ENCODE measurements at regions of chr2 and their contacts with region 1.

Region 1: DNA sequence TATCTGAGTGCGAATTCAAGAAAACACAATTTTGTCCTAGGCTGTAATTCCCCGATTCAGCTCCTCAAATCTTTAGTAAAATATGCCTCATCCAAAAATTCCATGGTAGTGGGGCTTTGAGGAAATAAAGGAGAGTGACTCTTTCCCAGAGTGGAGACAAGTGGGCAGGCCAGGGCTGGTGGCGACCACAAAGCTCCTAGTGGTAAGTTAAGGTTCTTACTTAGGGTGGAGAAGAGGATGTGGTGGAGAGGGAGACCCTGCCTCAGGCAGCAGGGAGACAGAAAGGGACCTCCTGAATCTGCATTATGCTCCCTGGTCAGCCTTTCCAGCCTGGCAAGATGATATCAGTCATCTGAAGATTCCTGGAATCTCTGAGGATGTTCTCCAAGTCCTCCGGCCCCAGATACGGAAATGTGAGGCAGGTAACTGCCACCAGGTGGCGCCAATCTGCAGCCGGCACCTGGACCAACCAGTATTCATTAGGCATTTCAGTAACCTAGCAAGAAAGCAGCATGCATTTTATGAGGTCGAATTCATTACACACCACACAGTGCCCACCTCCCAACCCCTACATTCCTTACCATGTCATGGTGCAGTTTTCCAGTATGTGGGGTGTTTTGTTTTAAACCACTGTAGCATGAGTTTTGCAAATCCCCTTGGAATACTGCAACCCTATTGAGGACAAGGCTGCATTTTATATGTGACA is 106.4 kb downstream of the POLE4 start:
- DNase-seq: peak; percentile 65
- ATAC-seq: peak; percentile 62
- H3K4me3 ChIP-seq: no peak overlapping the region
- H3K4me3 Mint-ChIP-seq: no peak overlapping the region
- H3K27ac ChIP-seq: no peak overlapping the region
- H3K27ac Mint-ChIP-seq: no peak overlapping the region
- H3K4me1 ChIP-seq: no peaks in the 10 kb centered on the region
- H3K4me1 Mint-ChIP-seq: no peaks in the 10 kb centered on the region
- H3K27me3 ChIP-seq: no peaks in the 10 kb centered on the region
- H3K27me3 Mint-ChIP-seq: no peaks in the 10 kb centered on the region
- CTCF ChIP-seq: peak; percentile 95

Region 2: DNA sequence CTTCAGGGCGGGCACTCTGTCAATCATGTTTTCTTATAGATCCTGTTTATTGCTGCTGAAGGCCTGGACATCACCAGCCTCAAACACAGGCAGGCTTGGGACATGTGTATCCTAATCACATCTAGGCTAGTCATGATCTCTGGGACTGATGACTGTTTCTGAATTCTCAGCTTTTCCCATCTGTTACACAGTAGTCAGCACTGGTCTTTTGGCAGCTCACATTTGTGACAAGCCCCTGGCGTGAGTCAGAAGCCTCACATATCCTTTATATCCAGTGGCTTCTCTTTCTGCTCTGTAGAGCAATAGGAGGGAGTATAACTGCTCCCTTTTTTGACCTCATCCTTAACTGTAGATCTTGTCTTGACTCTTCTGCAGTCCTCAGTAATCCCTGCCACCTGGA is 406.3 kb before region 1 on chr2:
- CTCF ChIA-PET with region 1: no interaction called
- POLR2A ChIA-PET with region 1: no interaction called
- intact Hi-C with region 1: no loop called
- DNase-seq: no peak
- ATAC-seq: no peak
- H3K4me3 ChIP-seq: no peak overlapping the region
- H3K4me3 Mint-ChIP-seq: no peak overlapping the region
- H3K27ac ChIP-seq: no peak overlapping the region
- H3K27ac Mint-ChIP-seq: no peak overlapping the region
- H3K4me1 ChIP-seq: peaks cover 8 to 11% of the 10 kb centered on the region in 2 donors
- H3K4me1 Mint-ChIP-seq: peaks cover 14% of the 10 kb centered on the region
- H3K27me3 ChIP-seq: no peaks in the 10 kb centered on the region
- H3K27me3 Mint-ChIP-seq: no peaks in the 10 kb centered on the region
- CTCF ChIP-seq: no peak

Region 3: DNA sequence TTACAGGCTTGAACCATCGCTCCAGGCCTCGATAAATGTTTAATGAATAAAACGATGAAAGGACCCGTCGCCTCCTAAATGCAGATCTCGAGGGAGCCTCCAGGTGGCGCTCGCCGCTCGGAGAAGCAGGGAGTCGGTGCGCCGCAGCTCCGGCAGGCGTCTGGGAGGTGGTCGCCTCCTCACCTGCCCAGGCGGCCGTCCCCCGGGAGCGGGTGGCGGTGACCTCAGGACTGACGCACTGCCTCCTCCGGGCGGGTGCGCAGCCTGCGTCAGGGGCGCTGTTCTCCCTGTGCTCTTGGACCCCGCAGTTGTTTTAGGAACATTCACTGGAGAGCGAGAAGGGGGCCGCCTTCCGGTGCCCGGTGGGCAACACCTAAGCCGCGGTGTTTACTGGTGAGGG is 145.0 kb before region 1 on chr2:
- CTCF ChIA-PET with region 1: interaction called, 10 read pairs
- POLR2A ChIA-PET with region 1: no interaction called
- intact Hi-C with region 1: loop called (anchors 1 kb)
- DNase-seq: peak; percentile 79
- ATAC-seq: peak; percentile 88
- H3K4me3 ChIP-seq: peak overlapping the region in 1 of 5 experiments; percentile 21
- H3K4me3 Mint-ChIP-seq: peak overlapping the region; percentile 68
- H3K27ac ChIP-seq: no peak overlapping the region
- H3K27ac Mint-ChIP-seq: peak overlapping the region; percentile 15
- H3K4me1 ChIP-seq: peaks cover 3 to 7% of the 10 kb centered on the region in 2 donors
- H3K4me1 Mint-ChIP-seq: peaks cover 27% of the 10 kb centered on the region
- H3K27me3 ChIP-seq: peaks cover 0 to 6% (median 0%) of the 10 kb centered on the region in 4 experiments
- H3K27me3 Mint-ChIP-seq: peaks cover 18% of the 10 kb centered on the region
- CTCF ChIP-seq: peak; percentile 96

Region 4: GRCh38 chr2:75053484-75054112 is 11.2 kb before region 1 on chr2:
- CTCF ChIA-PET with region 1: interaction called, 15 read pairs
- POLR2A ChIA-PET with region 1: no interaction called
- intact Hi-C with region 1: no loop called
- DNase-seq: peak; percentile 27
- ATAC-seq: peak; percentile 45
- H3K4me3 ChIP-seq: no peak overlapping the region
- H3K4me3 Mint-ChIP-seq: no peak overlapping the region
- H3K27ac ChIP-seq: no peak overlapping the region
- H3K27ac Mint-ChIP-seq: no peak overlapping the region
- H3K4me1 ChIP-seq: no peaks in the 10 kb centered on the region
- H3K4me1 Mint-ChIP-seq: no peaks in the 10 kb centered on the region
- H3K27me3 ChIP-seq: no peaks in the 10 kb centered on the region
- H3K27me3 Mint-ChIP-seq: no peaks in the 10 kb centered on the region
- CTCF ChIP-seq: peak; percentile 65

Region 5: GRCh38 chr2:75076088-75076487 is 11.2 kb after region 1 on chr2:
- CTCF ChIA-PET with region 1: interaction called, 39 read pairs
- POLR2A ChIA-PET with region 1: no interaction called
- intact Hi-C with region 1: no loop called
- DNase-seq: no peak
- ATAC-seq: no peak
- H3K4me3 ChIP-seq: no peak overlapping the region
- H3K4me3 Mint-ChIP-seq: no peak overlapping the region
- H3K27ac ChIP-seq: no peak overlapping the region
- H3K27ac Mint-ChIP-seq: no peak overlapping the region
- H3K4me1 ChIP-seq: no peaks in the 10 kb centered on the region
- H3K4me1 Mint-ChIP-seq: no peaks in the 10 kb centered on the region
- H3K27me3 ChIP-seq: no peaks in the 10 kb centered on the region
- H3K27me3 Mint-ChIP-seq: no peaks in the 10 kb centered on the region
- CTCF ChIP-seq: no peak

Region 6: DNA sequence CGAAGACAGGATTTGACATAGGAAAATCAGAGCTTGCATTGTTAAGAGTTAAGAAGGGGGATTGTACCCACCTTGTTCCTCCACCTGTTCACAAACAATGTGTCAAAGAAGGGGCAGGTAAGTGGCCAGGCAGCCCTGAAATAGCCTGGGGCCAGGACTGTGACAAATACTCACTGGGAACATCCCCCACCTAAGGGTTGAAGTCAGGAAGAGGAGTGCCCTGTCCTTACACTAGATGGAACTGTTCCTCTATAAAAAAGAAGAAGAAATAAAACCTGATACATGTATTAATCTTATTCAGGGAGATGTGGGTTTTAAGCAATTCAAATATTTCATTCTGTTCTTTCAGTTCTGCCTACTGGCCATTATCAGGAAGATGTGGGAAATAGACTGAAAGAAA is 92.6 kb after region 1 on chr2:
- CTCF ChIA-PET with region 1: no interaction called
- POLR2A ChIA-PET with region 1: no interaction called
- intact Hi-C with region 1: no loop called
- DNase-seq: no peak
- ATAC-seq: no peak
- H3K4me3 ChIP-seq: no peak overlapping the region
- H3K4me3 Mint-ChIP-seq: no peak overlapping the region
- H3K27ac ChIP-seq: no peak overlapping the region
- H3K27ac Mint-ChIP-seq: no peak overlapping the region
- H3K4me1 ChIP-seq: no peaks in the 10 kb centered on the region
- H3K4me1 Mint-ChIP-seq: no peaks in the 10 kb centered on the region
- H3K27me3 ChIP-seq: peaks cover 0 to 5% (median 1%) of the 10 kb centered on the region in 4 experiments
- H3K27me3 Mint-ChIP-seq: no peaks in the 10 kb centered on the region
- CTCF ChIP-seq: no peak

Region 7: DNA sequence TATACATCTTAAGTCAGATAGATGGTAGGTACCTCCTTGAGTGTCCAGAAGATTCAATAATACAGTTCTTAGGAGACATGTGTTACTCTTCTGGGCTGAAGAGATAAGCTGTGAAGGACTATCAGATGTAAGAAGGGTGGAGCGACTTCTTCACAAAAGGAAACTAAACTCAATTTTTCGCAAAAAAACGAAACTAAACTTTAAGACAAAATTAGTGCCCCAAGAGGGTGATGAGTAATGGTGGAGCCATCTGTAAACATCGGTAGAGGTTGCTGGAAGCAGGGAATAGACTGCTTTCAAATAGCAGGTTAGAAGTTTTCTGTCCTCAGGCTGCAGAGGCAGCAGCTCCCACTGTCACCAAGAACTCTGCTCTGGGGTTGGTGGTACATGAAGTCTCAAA is 246.0 kb after region 1 on chr2:
- CTCF ChIA-PET with region 1: no interaction called
- POLR2A ChIA-PET with region 1: no interaction called
- intact Hi-C with region 1: no loop called
- DNase-seq: no peak
- ATAC-seq: no peak
- H3K4me3 ChIP-seq: no peak overlapping the region
- H3K4me3 Mint-ChIP-seq: no peak overlapping the region
- H3K27ac ChIP-seq: no peak overlapping the region
- H3K27ac Mint-ChIP-seq: no peak overlapping the region
- H3K4me1 ChIP-seq: peaks cover 12% of the 10 kb centered on the region in 2 donors
- H3K4me1 Mint-ChIP-seq: peaks cover 17% of the 10 kb centered on the region
- H3K27me3 ChIP-seq: no peaks in the 10 kb centered on the region
- H3K27me3 Mint-ChIP-seq: no peaks in the 10 kb centered on the region
- CTCF ChIP-seq: no peak

Region 8: GRCh38 chr2:75466708-75467311 is 402.0 kb after region 1 on chr2:
- CTCF ChIA-PET with region 1: interaction called, 44 read pairs
- POLR2A ChIA-PET with region 1: no interaction called
- intact Hi-C with region 1: loop called (anchors 1 kb)
- DNase-seq: peak; percentile 49
- ATAC-seq: no peak
- H3K4me3 ChIP-seq: no peak overlapping the region
- H3K4me3 Mint-ChIP-seq: no peak overlapping the region
- H3K27ac ChIP-seq: no peak overlapping the region
- H3K27ac Mint-ChIP-seq: no peak overlapping the region
- H3K4me1 ChIP-seq: no peaks in the 10 kb centered on the region
- H3K4me1 Mint-ChIP-seq: peaks cover 1% of the 10 kb centered on the region
- H3K27me3 ChIP-seq: peaks cover 0 to 11% (median under 1%) of the 10 kb centered on the region in 4 experiments
- H3K27me3 Mint-ChIP-seq: peaks cover 20% of the 10 kb centered on the region
- CTCF ChIP-seq: peak; percentile 79